Tibial artery (tissue), 4 donors: ENCODE measurements at regions of chr12 and their contacts with region 1.

Region 1: DNA sequence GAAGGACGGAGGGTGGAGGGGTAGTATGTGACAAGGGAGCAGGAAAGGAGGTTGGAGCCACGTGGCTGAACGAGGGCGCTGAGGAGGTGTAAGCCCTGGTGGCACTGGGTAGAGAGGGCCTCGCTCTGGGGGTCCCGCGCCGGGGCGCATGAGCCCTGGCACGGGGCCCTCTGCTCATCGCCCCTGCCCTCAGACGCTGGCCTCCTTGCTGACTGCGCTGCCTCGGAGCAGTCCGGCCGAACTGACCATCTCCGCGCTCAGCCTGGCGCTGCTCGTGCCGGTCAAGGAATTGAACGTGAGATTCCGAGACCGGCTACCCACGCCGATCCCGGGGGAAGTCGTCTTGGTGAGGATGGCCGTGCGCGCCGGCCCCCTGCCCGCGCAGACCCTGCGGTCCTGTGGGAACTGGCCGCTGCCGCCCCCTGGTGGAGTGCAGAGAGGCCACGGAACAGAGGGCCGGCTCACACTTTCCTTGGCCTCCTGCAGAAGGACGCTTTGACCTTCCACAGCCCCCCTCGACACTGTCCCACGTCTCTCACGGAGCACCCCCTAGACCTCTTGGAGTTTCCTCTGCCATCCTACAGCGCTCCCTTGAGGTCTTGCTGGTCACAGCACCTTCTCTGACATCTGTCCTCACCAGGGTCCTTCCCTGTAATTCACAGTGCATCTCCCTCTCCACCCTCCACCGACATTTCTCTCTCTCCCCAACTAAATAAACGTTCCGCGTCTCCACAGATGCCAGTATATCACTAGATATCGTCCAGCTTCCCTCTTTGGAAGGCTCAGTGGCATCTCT is 10.5 kb downstream of the ARHGEF25 start:
- DNase-seq: peak in 1 of 2 donors; percentile 74
- H3K4me3 ChIP-seq: peak overlapping the region; percentile 33 to 45
- H3K27ac ChIP-seq: no peak overlapping the region
- H3K4me1 ChIP-seq: peaks cover 0 to 17% (median 13%) of the 10 kb centered on the region in 4 donors
- H3K27me3 ChIP-seq: peaks cover 0 to 4% of the 10 kb centered on the region in 2 donors
- CTCF ChIP-seq: peak; percentile 95 to 96

Region 2: GRCh38 chr12:57487597-57488401 is 133.9 kb before region 1 on chr12 and contains the start of gene MARS1:
- intact Hi-C with region 1: loop called (anchors 10 kb)
- DNase-seq: peak; percentile 97
- H3K4me3 ChIP-seq: peak within 1 kb of the TSS; percentile 86 to 98
- H3K27ac ChIP-seq: peak within 1 kb of the TSS; percentile 78 to 82
- H3K4me1 ChIP-seq: peaks cover 0 to 17% (median 13%) of the 10 kb centered on the region in 4 donors
- H3K27me3 ChIP-seq: peaks cover 0 to 1% of the 10 kb centered on the region in 2 donors
- CTCF ChIP-seq: no peak

Region 3: GRCh38 chr12:57563358-57563757 is 58.3 kb before region 1 on chr12:
- intact Hi-C with region 1: no loop called
- DNase-seq: no peak
- H3K4me3 ChIP-seq: no peak overlapping the region
- H3K27ac ChIP-seq: no peak overlapping the region
- H3K4me1 ChIP-seq: no peaks in the 10 kb centered on the region
- H3K27me3 ChIP-seq: peaks cover 0 to 16% of the 10 kb centered on the region in 2 donors
- CTCF ChIP-seq: no peak

Region 4: GRCh38 chr12:57583008-57583831 is 38.5 kb before region 1 on chr12:
- intact Hi-C with region 1: loop called (anchors 2 kb)
- DNase-seq: peak; percentile 67 to 72
- H3K4me3 ChIP-seq: no peak overlapping the region
- H3K27ac ChIP-seq: no peak overlapping the region
- H3K4me1 ChIP-seq: no peaks in the 10 kb centered on the region
- H3K27me3 ChIP-seq: peaks cover 0 to 6% of the 10 kb centered on the region in 2 donors
- CTCF ChIP-seq: peak; percentile 89 to 98